Dendritic cell treated with granulocyte-macrophage colony-stimulating factor and Interleukin-4, amounts not matched to agents 40 ng/mL and 50 ng/mL, for 4 days (primary cell): ENCODE measurements at regions of chr20 and their contacts with region 1.

Region 1: DNA sequence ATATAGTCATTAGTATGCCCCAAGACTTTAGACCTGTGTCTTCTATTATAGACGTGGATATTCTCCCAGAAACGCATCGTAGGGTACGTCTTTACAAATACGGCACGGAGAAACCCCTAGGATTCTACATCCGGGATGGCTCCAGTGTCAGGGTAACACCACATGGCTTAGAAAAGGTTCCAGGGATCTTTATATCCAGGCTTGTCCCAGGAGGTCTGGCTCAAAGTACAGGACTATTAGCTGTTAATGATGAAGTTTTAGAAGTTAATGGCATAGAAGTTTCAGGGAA is 18.3 kb downstream of the PARD6B start:
- H3K4me3 Mint-ChIP-seq: no peak overlapping the region
- H3K27ac Mint-ChIP-seq: no peak overlapping the region
- H3K4me1 Mint-ChIP-seq: no peaks in the 10 kb centered on the region
- H3K27me3 Mint-ChIP-seq: no peaks in the 10 kb centered on the region

Region 2: DNA sequence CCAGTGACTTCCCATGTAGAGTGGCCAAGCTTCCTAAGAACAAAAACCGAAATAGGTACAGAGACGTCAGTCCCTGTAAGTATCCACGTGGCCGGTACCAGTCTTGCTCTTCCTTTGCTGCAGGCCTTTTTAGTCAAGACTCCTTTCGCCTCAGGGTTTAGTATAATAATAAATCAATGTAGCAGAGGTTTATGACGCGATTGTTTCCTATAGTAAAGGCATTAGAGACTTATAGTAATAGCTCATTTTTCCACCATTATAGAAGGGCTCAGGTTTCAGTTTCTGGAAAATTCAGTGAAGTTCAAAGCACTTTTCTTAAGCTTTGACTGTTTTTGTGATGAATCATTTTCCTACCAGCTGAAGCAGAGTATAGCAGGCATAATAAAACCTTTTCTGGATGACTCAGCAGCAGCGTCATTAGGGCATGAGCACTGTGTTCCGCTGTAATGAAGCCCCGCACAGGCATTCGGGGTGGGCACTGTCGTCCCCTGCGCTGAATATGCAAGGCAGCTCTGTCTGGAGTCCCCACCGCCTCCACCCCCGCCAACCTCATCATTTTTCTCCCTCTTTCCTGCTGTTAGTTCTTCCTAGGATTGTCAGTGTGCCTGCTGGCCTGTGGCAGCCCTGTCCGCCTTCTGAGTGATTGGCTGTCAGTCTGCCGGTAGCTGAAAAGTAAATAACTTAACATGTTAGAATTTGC is 188.2 kb before region 1 on chr20:
- intact Hi-C with region 1: no loop called
- H3K4me3 Mint-ChIP-seq: no peak overlapping the region
- H3K27ac Mint-ChIP-seq: no peak overlapping the region
- H3K4me1 Mint-ChIP-seq: peaks cover 22% of the 10 kb centered on the region
- H3K27me3 Mint-ChIP-seq: no peaks in the 10 kb centered on the region

Region 3: DNA sequence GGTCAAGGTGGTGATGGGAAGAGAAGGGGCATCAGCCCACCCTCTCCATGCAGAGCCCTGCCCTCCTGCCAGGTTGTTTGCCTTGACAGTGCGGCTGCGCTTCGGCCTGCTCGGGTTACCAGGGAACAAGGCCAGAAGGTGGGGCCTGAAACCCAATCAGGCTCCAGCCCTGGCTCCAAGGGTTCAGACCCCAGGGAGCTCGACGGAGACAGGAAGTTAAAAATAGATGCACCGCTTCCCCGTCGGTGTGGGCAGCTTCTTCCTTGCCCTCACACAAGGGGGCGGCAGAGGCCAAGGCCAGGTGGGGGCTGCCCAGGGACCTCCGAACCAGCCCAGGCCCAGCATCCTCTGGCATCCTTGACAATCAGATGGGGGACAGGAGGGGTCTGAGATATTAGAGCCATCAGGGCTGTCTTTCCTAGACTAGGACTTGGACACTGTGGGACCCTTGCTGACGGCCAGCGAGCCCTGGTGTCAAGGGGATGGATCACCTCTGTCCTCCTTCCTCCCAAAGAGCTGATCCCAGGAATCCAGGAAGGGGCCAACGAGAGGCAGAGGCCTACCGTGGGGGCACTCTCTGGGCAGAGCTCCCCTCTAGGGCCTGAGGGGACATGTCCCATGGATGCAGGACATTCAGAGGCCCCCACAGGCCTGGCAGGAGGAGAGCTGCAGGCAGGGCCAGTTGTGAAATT is 123.6 kb before region 1 on chr20:
- intact Hi-C with region 1: loop called (anchors 2 kb)
- H3K4me3 Mint-ChIP-seq: no peak overlapping the region
- H3K27ac Mint-ChIP-seq: no peak overlapping the region
- H3K4me1 Mint-ChIP-seq: no peaks in the 10 kb centered on the region
- H3K27me3 Mint-ChIP-seq: no peaks in the 10 kb centered on the region

Region 4: GRCh38 chr20:50691573-50692551 is 57.8 kb before region 1 on chr20:
- intact Hi-C with region 1: no loop called
- H3K4me3 Mint-ChIP-seq: no peak overlapping the region
- H3K27ac Mint-ChIP-seq: no peak overlapping the region
- H3K4me1 Mint-ChIP-seq: peaks cover 11% of the 10 kb centered on the region
- H3K27me3 Mint-ChIP-seq: peaks cover 57% of the 10 kb centered on the region

Region 5: GRCh38 chr20:50913690-50914375 is 164.1 kb after region 1 on chr20:
- intact Hi-C with region 1: no loop called
- H3K4me3 Mint-ChIP-seq: no peak overlapping the region
- H3K27ac Mint-ChIP-seq: no peak overlapping the region
- H3K4me1 Mint-ChIP-seq: peaks cover 47% of the 10 kb centered on the region
- H3K27me3 Mint-ChIP-seq: no peaks in the 10 kb centered on the region